PC-9 (cell line): ENCODE measurements at regions of chr9 and their contacts with region 1.

Region 1: GRCh38 chr9:38756702-38757101 is 36.8 kb upstream of the FAM240B start:
- DNase-seq: no peak
- H3K4me3 ChIP-seq: no peak overlapping the region
- H3K27ac ChIP-seq: no peak overlapping the region
- H3K4me1 ChIP-seq: no peaks in the 10 kb centered on the region
- H3K27me3 ChIP-seq: no peaks in the 10 kb centered on the region
- CTCF ChIP-seq: no peak

Region 2: GRCh38 chr9:38689678-38690077 is 67.0 kb before region 1 on chr9:
- CTCF ChIA-PET with region 1: no interaction called
- POLR2A ChIA-PET with region 1: no interaction called
- intact Hi-C with region 1: loop called (anchors 10 kb)
- DNase-seq: no peak
- H3K4me3 ChIP-seq: no peak overlapping the region
- H3K27ac ChIP-seq: no peak overlapping the region
- H3K4me1 ChIP-seq: 0 out of 2 replicates have a peak, but pooled peaks cover 6% of the 10 kb centered on the region
- H3K27me3 ChIP-seq: no peaks in the 10 kb centered on the region
- CTCF ChIP-seq: no peak

Region 3: DNA sequence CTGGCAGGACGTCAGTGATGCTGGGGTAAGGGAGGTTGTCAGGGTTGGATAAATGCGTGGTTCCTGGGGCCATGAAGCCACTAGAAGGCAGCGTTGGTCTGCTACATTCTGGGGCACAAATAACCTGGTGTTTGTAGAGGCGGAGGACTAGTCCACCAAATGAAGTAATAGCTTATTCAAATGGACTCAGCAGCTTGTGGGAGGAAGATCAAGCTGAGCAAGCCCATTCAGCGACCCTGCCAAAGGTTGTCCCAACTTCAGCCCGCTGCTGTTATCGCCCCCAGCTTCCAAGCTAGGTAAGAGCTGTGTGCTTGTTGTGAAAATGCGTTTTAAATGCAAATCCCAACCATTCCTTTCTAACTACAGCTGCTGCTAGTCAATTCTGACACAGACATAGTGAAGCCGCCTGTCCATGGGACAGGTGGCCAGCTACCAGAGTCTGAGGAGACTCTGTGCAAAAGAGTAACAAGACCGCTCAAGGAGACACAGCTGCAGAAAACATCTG is 29.2 kb before region 1 on chr9:
- CTCF ChIA-PET with region 1: no interaction called
- POLR2A ChIA-PET with region 1: no interaction called
- intact Hi-C with region 1: no loop called
- DNase-seq: peak in 1 of 2 experiments; percentile 40
- H3K4me3 ChIP-seq: no peak overlapping the region
- H3K27ac ChIP-seq: no peak overlapping the region
- H3K4me1 ChIP-seq: no peaks in the 10 kb centered on the region
- H3K27me3 ChIP-seq: no peaks in the 10 kb centered on the region
- CTCF ChIP-seq: peak; percentile 51